ENCODE measurements at regions of chr9 and their contacts with region 1.

Region 1: GRCh38 chr9:133184962-133185361 is 21.2 kb upstream of the GBGT1 start:
- DNase-seq: peak; percentile 62
- H3K4me3 Mint-ChIP-seq: no peak overlapping the region
- H3K27ac Mint-ChIP-seq: no peak overlapping the region
- H3K4me1 Mint-ChIP-seq: peaks cover 27% of the 10 kb centered on the region
- H3K27me3 Mint-ChIP-seq: peaks cover 48% of the 10 kb centered on the region

Region 2: DNA sequence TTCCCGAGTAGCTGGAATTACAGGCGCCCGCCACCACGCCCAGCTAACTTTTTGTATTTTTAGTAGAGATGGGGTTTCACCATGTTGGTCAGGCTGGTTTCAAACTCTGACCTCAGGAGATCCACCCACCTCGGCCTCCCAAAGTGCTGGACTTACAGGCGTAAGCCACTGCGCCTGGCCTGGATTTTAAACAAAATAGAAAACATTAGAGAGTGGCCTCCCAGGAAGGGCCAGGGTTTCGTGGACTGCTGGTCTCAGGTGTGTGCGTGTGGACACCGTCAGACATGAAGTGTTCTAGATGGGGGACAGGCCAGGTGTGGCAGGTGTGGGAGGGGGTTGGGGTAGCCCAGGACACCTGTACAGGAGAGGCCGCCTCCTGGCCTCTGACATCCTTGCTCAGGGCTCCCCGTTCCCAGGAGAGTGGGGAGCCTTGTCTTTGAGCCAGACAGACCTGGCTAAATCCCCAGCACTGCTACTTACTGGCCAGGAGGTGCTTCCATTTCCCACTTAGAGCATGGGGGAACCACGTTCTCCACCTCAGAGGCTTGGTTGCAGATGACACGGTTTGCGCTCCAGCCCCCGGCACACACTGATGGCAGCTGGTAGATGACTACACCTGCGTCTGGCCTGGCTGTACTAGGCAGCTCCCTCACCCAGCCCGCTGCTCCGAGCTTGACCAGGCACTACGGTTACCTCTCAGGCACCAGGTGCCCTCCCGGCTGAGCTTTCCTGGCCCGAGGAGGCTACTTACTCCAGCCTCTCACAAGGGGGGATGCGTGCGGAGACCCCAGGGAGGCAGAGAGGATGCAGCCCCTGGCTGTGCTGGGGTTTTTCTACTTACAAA is 14.0 kb before region 1 on chr9:
- CTCF ChIA-PET with region 1: interaction called, 11 read pairs
- POLR2A ChIA-PET with region 1: no interaction called
- DNase-seq: no peak
- H3K4me3 Mint-ChIP-seq: no peak overlapping the region
- H3K27ac Mint-ChIP-seq: no peak overlapping the region
- H3K4me1 Mint-ChIP-seq: no peaks in the 10 kb centered on the region
- H3K27me3 Mint-ChIP-seq: peaks cover 14% of the 10 kb centered on the region

Region 3: DNA sequence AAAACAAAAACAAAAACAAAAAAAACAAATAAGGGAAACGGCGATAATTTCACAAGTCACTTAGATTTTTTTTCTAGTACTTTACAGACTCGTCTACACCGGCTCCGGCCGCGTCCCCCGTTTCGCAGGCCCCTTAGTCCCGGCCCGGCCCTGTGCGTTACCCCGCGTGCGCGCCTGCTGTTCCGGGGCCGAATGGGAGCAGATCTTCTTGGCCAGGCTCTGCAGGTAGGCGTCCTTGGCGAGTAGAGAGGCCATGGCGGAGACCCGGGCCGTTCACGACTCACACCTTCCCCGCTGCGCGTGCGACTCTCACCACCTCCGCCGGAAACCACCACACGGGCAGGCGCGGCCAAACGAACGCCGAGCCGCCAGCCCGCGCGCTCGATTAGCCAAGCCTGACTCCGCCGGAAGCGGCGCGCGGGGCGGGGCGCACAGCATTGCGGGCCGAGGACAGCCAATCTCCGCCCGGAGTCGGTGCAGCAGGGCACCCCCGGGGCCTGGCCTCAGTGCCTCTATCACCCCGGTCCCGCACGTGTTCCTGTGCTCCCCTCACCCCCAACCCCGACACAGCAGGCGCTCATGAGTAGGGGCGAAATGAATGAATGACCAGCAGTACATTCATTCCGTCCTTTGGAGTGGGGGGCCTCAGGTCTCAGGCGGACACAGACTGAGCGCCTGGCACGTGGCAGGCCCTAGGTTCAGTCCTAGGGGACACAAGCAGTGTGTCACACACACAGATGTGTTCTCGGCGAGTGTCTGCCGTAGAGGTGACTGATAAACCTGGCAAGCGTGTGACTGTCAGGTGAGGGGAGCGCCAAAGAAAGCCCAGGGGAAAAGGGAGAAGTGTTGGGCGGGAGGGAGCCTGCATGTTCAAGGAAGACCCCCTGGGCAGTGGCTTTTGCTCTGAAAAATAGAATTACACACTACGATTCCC is 151.2 kb after region 1 on chr9 and contains the start of gene SURF6:
- CTCF ChIA-PET with region 1: interaction called, 16 read pairs
- POLR2A ChIA-PET with region 1: no interaction called
- DNase-seq: peak; percentile 94
- H3K4me3 Mint-ChIP-seq: peak within 1 kb of the TSS; percentile 86
- H3K27ac Mint-ChIP-seq: peak within 1 kb of the TSS; percentile 88
- H3K4me1 Mint-ChIP-seq: peaks cover 51% of the 10 kb centered on the region
- H3K27me3 Mint-ChIP-seq: no peaks in the 10 kb centered on the region
- total RNA-seq, gene SURF6: 9.3 to 10.9 TPM

Region 4: DNA sequence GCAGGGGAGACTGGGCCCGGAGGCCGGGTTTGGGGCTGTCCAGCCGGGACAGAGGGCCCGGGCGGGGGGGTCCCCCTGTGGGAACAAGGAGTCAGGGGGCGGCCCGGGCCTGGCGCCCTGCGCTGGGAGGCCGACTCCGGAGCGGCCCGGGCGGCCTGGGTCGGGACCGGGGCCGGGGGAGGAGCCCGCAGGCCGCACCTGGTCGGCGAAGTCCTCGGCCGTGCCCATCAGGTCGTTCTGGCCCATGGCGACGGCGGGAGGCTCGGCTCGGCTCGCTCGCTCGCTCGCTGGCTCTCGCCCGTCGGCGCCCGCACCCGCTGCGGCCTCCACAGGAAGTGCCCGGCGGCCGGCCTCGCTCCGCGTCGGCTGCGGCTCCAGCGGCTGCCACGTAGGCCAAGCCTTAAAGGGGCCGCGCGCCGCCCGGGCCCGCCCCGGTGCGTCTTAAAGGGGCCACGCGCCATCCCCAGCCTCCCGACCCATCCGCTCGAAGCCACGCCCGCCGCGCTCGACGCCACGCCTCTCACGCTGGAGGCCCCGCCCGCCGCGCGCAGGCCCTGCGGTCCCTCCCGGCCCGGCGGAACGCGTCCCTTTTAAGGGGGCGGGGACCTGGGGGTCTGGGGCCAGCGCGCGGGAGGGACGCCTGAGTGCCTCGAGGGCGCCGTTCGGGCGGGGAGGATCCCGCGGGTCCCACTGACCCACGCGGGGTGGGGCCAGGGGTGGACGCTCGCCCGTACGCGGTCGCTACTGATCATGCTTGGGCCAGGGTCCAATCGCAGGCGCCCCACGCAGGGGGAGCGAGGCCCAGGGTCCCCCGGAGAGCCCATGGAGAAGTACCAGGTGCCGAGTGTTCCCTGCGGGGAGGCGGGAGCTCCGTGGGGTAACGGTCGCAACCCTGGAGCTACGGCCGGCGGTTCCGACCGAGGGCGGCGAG is 191.0 kb after region 1 on chr9 and contains the starts of genes STKLD1 and SURF4:
- CTCF ChIA-PET with region 1: interaction called, 10 read pairs
- POLR2A ChIA-PET with region 1: interaction called, 3 read pairs
- DNase-seq: peak; percentile 96
- H3K4me3 Mint-ChIP-seq: peak within 1 kb of the TSS; percentile 83
- H3K27ac Mint-ChIP-seq: peak within 1 kb of the TSS; percentile 97
- H3K4me1 Mint-ChIP-seq: peaks cover 36% of the 10 kb centered on the region
- H3K27me3 Mint-ChIP-seq: peaks cover 2% of the 10 kb centered on the region
- total RNA-seq, gene STKLD1: 0.65 to 0.71 TPM
- total RNA-seq, gene SURF4: 249 to 260 TPM

Region 5: DNA sequence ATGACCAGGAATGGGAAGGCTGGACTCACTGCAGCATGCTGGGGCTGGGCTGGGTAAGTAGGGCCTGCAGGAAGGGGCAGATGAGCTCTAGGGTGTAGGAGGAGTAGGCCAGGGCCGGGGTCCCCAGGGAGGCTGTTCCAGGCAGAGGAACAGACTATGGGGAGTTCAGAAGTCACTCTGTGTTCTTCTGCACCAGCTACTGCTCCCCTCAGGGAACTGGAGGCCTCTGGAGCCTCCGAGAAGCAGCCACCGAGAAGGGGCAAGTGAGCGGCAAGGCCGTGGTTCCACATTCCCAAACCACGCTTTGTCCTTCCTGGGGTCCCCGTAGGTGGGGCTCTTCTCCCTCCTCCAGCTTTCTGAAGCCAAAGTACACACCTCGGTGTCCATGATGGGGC is 302.4 kb after region 1 on chr9:
- CTCF ChIA-PET with region 1: interaction called, 11 read pairs
- POLR2A ChIA-PET with region 1: no interaction called
- DNase-seq: no peak
- H3K4me3 Mint-ChIP-seq: no peak overlapping the region
- H3K27ac Mint-ChIP-seq: no peak overlapping the region
- H3K4me1 Mint-ChIP-seq: peaks cover 3% of the 10 kb centered on the region
- H3K27me3 Mint-ChIP-seq: peaks cover 9% of the 10 kb centered on the region